Heart right ventricle (tissue), 16 donors: ENCODE measurements at regions of chr4 and their contacts with region 1.

Region 1: GRCh38 chr4:123396307-123397143 is at the start of gene SPRY1:
- DNase-seq: peak; percentile 78 to 95
- ATAC-seq: peak; percentile 83 to 91 (median 88)
- H3K4me3 ChIP-seq: peak within 1 kb of the TSS; percentile 65 to 85 (median 74)
- H3K27ac ChIP-seq: peak within 1 kb of the TSS; percentile 85 to 97 (median 94)
- H3K4me1 ChIP-seq: peaks cover 0 to 23% (median 6%) of the 10 kb centered on the region in 9 donors
- H3K27me3 ChIP-seq: peaks cover 0 to 8% (median 0%) of the 10 kb centered on the region in 7 donors
- CTCF ChIP-seq: no peak
- total RNA-seq, gene SPRY1: 21.6 to 61.7 (median 37.4) TPM

Region 2: GRCh38 chr4:123244137-123244536 is 152.4 kb before region 1 on chr4:
- intact Hi-C with region 1: loop called in 6 of 10 experiments (anchors 1 to 10 kb)
- DNase-seq: peak; percentile 51 to 65
- ATAC-seq: peak; percentile 75 to 98 (median 96)
- H3K4me3 ChIP-seq: peak overlapping the region in 1 of 10 donors; percentile 15
- H3K27ac ChIP-seq: peak overlapping the region in 2 of 10 donors; percentile 9 to 68
- H3K4me1 ChIP-seq: peaks cover 2 to 48% (median 36%) of the 10 kb centered on the region in 9 donors
- H3K27me3 ChIP-seq: no peaks in the 10 kb centered on the region
- CTCF ChIP-seq: peak in 7 of 9 donors; percentile 22 to 72 (median 45)

Region 3: DNA sequence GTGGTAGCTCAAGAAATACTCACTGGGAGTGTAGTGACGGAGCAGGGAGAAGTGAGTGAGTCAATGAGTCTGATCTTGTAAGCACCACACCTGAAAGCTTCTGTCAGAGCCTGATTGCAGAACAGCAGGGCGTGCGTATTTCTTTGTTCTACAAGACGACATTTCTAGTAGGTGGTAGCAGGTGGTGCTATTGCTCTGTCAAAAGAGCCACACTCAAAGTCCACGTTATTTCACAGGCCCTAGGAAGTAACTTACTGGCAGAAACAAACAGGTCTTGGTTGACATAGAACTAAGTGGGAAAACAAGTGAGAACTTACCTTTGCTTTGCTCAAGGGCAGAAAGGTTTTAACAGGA is 46.4 kb before region 1 on chr4:
- intact Hi-C with region 1: loop called in 3 of 10 experiments (anchors 5 kb)
- DNase-seq: no peak
- ATAC-seq: peak in 3 of 8 donors; percentile 8 to 41 (median 29)
- H3K4me3 ChIP-seq: no peak overlapping the region
- H3K27ac ChIP-seq: peak overlapping the region in 1 of 10 donors; percentile 23
- H3K4me1 ChIP-seq: peaks cover 0 to 53% (median 22%) of the 10 kb centered on the region in 9 donors
- H3K27me3 ChIP-seq: no peaks in the 10 kb centered on the region
- CTCF ChIP-seq: peak in 2 of 9 donors; percentile 16 to 31

Region 4: DNA sequence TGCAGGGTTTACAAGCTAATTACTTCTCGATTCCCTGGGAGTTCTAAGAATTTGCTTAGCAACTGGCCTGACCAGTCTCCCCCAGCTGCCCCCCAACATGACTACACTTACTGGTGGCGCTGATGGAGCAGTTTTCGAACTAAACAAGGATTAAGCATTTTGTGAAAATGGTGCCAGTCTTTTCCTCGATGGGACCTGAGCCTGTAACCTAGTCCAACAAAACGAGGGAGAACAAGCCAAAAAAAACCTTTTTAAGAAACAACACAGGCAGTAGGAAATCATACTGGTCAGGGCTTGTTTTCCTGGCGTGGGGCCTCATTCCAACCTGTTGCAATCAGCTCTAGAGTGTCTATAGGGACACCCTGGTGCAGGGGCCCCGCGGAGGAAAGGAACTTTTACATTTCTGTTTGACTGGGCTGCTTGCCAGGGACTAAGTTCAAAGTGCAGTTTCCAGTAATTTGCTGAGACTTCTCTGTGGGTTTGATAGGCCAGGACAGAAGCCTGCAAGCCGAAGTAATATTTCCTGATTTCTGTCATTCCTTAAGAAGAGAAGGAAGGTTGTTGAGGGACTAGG is 158.8 kb after region 1 on chr4:
- intact Hi-C with region 1: loop called in 5 of 10 experiments (anchors 5 to 10 kb)
- DNase-seq: peak; percentile 75 to 87
- ATAC-seq: peak; percentile 76 to 93 (median 90)
- H3K4me3 ChIP-seq: peak overlapping the region in 2 of 10 donors; percentile 3 to 12
- H3K27ac ChIP-seq: peak overlapping the region; percentile 0 to 79 (median 66)
- H3K4me1 ChIP-seq: peaks cover 0 to 43% (median 27%) of the 10 kb centered on the region in 9 donors
- H3K27me3 ChIP-seq: no peaks in the 10 kb centered on the region
- CTCF ChIP-seq: no peak

Region 5: DNA sequence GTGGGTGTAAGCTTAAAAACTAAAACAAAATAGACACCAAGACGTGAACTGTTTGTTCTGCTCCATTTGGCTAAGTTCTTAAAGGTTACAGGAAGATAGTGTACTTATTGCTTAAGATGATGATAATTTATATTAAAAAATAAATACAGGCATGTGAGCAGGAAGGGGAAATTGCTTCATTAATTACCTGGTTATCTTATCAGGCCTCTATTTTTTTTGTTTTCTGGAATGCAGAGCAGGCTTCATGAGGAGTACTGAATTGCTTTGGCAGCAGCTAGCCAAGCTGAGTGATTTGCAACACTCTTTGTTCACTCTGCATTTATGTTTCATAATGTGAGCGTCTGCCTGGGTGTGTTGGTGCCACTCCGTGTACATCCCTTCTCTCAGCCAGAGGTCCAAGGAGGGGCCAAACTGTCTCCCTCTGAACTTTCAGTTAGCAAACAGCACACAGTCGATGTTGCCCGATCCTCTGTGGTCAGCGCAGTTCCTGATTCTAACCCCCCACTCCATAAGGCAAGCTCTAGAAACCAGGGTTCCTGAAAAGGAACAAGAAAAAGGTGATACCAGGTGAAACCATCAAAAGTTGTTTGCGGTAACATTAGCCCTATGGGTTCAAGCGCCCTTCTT is 348.3 kb after region 1 on chr4:
- intact Hi-C with region 1: loop called in 3 of 10 experiments (anchors 5 to 10 kb)
- DNase-seq: no peak
- ATAC-seq: peak in 6 of 8 donors; percentile 32 to 72 (median 64)
- H3K4me3 ChIP-seq: no peak overlapping the region
- H3K27ac ChIP-seq: peak overlapping the region; percentile 7 to 73 (median 55)
- H3K4me1 ChIP-seq: peaks cover 8 to 52% (median 25%) of the 10 kb centered on the region in 9 donors
- H3K27me3 ChIP-seq: no peaks in the 10 kb centered on the region
- CTCF ChIP-seq: no peak

Region 6: GRCh38 chr4:124105212-124105611 is 708.7 kb after region 1 on chr4:
- intact Hi-C with region 1: loop called in 6 of 10 experiments (anchors 5 to 10 kb)
- DNase-seq: no peak
- ATAC-seq: peak in 3 of 8 donors; percentile 31 to 59 (median 51)
- H3K4me3 ChIP-seq: no peak overlapping the region
- H3K27ac ChIP-seq: no peak overlapping the region
- H3K4me1 ChIP-seq: no peaks in the 10 kb centered on the region
- H3K27me3 ChIP-seq: no peaks in the 10 kb centered on the region
- CTCF ChIP-seq: no peak